Left colon (tissue), 2 donors: ENCODE measurements at regions of chr3 and their contacts with region 1.

Region 1: GRCh38 chr3:185764163-185764979 is 60.5 kb downstream of the IGF2BP2 start:
- DNase-seq: no peak
- ATAC-seq: no peak

Region 2: DNA sequence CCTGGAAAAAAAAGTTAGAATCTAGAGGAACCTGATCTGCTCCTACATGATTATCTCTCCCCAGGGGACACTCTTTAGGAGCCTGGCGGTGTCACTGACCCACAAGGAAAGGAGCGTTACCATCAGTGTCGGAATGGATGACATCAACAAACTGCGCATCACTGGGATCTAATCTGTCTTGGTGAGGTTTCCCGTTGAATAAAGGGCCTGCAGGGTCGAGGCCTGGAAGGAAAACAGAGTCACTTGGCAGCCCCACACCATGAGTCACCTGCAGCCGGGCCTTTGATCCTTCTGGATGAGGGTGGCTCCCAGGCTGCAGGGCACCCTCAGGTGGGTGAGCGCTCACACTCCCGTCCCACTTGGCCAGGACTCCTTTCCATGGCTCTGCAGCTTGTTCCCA is 237.0 kb before region 1 on chr3:
- intact Hi-C with region 1: no loop called
- DNase-seq: no peak
- ATAC-seq: peak; percentile 21

Region 3: GRCh38 chr3:185595526-185595925 is 168.8 kb before region 1 on chr3:
- intact Hi-C with region 1: no loop called
- DNase-seq: no peak
- ATAC-seq: no peak

Region 4: DNA sequence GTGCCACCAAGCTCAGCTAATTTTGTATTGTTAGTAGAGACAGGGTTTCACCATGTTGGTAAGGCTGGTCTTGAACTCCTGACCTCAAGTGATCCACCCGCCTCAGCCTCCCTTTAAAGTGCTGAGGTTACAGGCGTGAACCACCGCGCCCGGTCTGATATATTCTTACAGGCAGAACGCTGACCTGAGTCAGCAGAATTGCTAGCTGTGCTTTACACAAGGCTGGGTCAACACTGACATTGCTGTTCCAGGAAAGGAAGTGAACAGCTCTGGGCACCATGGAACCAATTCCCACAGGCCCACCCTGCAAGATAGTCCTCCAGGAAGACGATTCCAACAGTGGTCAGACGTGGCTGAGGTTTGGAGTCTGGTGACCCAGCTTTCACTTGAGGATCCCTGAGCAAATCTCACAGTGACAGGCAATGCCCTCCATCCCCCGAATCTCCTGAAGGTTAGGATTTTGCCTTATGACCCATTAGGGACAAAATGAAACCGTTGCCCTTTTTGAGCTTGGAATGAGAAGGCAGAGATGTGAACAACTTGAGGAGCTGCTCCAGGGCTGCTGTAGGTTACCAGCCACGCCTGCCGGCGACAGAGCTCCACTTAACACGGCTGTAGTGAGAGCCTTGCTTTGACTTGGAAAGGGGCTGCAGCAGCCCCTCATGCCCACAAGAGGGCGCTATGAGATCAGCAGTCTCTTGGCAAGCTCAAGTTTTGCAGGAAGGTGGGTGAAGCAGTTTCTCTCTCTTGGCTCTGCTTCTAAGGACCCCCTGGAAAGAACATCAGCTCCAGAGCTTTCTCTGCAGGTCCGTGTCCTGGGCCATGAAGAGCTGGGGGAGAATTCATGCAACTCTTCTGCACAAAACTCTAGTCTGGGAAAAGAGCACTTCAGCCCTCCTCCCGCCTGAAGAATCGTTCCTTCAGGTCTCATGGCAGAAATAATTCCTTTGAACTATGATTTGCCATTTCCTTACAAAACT is 104.1 kb before region 1 on chr3:
- intact Hi-C with region 1: loop called in 1 of 2 experiments (anchors 10 kb)
- DNase-seq: peak; percentile 75 to 83
- ATAC-seq: peak; percentile 87

Region 5: DNA sequence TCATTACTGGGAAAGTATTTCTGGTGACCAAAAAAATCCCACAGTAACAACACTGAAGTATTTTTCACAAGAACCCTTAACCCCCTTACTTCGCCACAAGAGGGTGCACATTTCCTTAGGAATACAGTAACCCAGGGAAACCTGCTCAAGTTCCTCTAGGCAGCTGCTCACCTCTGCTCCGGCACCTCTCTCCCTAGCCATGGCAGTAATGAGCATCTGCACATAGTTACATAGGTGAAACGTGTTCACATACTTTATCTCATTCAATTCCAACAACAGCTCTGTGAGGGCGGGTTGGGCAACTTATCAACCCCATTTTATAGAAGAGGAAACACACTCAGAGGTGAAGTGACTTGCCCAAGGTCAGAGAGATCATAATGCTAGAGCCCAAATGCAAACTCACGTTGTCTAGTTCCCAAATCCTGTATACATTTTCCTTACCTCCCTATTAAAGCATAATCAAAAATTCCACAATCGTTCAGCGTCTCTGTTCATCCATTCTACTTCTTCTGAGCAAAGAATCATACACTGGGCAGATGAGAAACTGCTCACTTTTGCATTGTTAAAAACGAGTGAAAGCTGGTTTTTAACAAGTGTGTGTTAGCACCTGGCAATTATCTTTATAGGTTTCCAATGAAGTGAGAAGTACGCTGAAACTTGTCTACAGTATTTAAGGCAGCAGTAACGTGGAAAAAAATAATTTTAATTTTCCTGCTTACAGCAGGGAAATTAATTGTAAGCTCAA is 30.2 kb before region 1 on chr3:
- intact Hi-C with region 1: loop called in 1 of 2 experiments (anchors 2 kb)
- DNase-seq: peak; percentile 63 to 80
- ATAC-seq: peak; percentile 96